ENCODE measurements at regions of chr15 and their contacts with region 1.

Region 1: GRCh38 chr15:75694241-75695182 is 18.1 kb downstream of the CSPG4 start:
- DNase-seq: peak; percentile 72 to 90 (median 86)
- ATAC-seq: peak; percentile 78 to 92 (median 89)
- H3K4me3 ChIP-seq: peak overlapping the region in 1 of 12 donors; percentile 6
- H3K27ac ChIP-seq: peak overlapping the region in 11 of 12 donors; percentile 26 to 93 (median 67)
- H3K4me1 ChIP-seq: peaks cover 4 to 49% (median 29%) of the 10 kb centered on the region in 12 donors
- H3K27me3 ChIP-seq: peaks cover 0 to 5% (median 0%) of the 10 kb centered on the region in 9 donors
- CTCF ChIP-seq: peak in 9 of 12 donors; percentile 7 to 52 (median 30)
- POLR2A ChIP-seq: no peak

Region 2: GRCh38 chr15:75732809-75733451 is 38.4 kb after region 1 on chr15:
- intact Hi-C with region 1: loop called in 9 of 10 experiments (anchors 5 to 10 kb)
- DNase-seq: peak in 4 of 5 donors; percentile 65 to 75 (median 70)
- ATAC-seq: peak; percentile 18 to 77 (median 67)
- H3K4me3 ChIP-seq: no peak overlapping the region
- H3K27ac ChIP-seq: peak overlapping the region in 3 of 12 donors; percentile 10 to 63 (median 13)
- H3K4me1 ChIP-seq: peaks cover 0 to 42% (median 18%) of the 10 kb centered on the region in 12 donors
- H3K27me3 ChIP-seq: no peaks in the 10 kb centered on the region
- CTCF ChIP-seq: peak; percentile 71 to 94 (median 87)
- POLR2A ChIP-seq: no peak

Region 3: DNA sequence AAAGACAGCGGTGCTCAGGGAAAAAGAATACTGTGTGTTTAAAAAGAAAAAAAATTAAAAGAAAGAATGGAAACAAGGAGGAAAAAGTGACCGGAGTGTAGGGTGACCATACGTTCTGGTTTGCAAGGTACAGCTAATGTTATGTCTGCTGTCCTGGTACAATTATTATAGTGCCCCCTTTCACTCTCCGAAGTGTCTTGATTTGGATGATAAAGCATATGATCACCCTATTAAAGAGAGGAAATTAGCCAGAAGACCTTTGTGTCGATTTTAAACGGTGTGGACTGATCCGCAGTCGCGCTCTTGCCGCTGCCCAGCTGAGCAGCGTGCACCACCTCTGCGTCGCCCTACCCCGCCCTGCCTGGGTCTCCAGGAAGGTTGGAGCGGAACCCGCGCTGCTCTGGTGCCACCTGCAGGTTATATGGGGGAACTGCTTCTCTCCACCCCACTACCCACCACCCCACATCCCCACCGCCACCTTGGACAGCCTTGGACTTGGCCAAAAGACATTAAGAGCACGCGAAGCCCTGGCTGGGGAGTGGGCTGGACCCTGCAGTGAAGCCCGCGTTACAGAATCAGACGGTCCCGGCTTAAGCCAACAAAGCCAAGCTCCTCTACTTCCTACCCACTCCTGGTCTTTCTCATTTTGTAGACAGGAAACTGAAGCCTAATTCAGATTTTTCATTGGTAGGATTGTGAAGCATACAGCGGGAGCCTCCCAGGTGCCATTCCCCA is 107.5 kb after region 1 on chr15:
- intact Hi-C with region 1: loop called in 6 of 10 experiments (anchors 5 kb)
- DNase-seq: peak; percentile 78 to 92 (median 84)
- ATAC-seq: peak; percentile 93 to 99 (median 98)
- H3K4me3 ChIP-seq: peak overlapping the region in 8 of 12 donors; percentile 11 to 40 (median 29)
- H3K27ac ChIP-seq: no peak overlapping the region
- H3K4me1 ChIP-seq: peaks cover 0 to 16% (median 4%) of the 10 kb centered on the region in 12 donors
- H3K27me3 ChIP-seq: peaks cover 0 to 27% (median 0%) of the 10 kb centered on the region in 9 donors
- CTCF ChIP-seq: peak; percentile 79 to 98 (median 92)
- POLR2A ChIP-seq: no peak

Region 4: DNA sequence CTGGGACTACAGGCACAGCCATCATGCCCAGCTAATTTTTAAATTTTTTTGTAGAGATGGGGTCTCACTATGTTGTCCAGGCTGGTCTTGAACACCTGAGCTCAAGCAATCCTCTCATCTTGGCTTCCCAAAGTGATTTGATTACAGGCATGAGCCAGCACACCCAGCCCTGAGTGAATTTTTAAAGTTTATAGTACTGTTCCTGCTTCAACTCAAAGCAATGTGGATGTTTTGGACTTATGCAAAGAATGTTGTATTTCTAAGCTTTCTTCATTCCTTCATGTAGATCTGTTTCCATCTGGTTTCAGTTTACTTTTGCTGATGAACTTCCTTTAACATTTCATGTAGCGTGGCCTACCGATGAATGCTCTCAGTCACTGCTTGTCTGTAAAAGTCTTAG is 294.5 kb after region 1 on chr15:
- intact Hi-C with region 1: no loop called
- DNase-seq: no peak
- ATAC-seq: no peak
- H3K4me3 ChIP-seq: no peak overlapping the region
- H3K27ac ChIP-seq: no peak overlapping the region
- H3K4me1 ChIP-seq: no peaks in the 10 kb centered on the region
- H3K27me3 ChIP-seq: no peaks in the 10 kb centered on the region
- CTCF ChIP-seq: no peak
- POLR2A ChIP-seq: no peak

Measured in heart left ventricle (tissue), 16 donors.